SK-N-SH (cell line): ENCODE measurements at regions of chr10 and their contacts with region 1.

Region 1: DNA sequence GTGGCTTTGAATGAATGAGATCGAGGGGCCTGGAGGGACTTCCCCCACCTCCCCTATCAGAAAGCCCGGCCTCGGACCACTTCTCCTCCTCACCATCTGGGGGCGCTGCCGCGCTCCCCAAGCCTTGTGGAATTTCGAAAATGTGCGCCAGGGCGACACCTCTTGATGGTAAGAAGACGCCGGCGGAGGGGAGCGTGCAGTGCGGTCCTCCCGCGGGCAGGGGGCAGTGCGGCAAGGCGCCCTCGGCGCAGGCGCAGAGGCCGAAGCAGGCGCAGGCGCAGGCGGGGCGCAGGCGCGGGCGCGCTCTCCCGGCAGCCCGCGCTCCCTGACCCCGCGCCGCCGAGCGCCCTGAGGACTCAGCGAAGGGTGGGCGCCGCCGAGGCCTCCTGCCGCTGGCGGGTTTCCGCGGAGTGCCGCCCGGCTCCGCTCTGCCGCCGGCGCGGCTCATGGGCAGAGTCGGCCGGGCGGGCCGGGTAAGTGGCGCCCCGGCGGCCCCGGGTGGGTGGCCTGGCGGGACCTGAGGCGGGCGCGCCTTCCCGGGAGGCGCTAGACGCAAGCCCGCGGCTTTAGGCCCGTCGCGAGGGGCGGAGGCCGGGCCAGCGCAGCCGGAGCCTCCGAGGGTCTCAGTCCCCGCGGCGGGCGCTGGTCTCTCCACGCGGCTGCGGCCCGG is at the start of gene RBM17:
- DNase-seq: peak; percentile 96
- H3K4me3 ChIP-seq: peak within 1 kb of the TSS; percentile 89 to 90
- H3K27ac ChIP-seq: peak within 1 kb of the TSS; percentile 36 to 63; a peak in 3 of 4 replicates
- H3K4me1 ChIP-seq: peaks cover 13% of the 10 kb centered on the region in 2 experiments; a peak in 3 of 4 replicates
- H3K27me3 ChIP-seq: 0 out of 2 replicates have a peak, but pooled peaks cover 6% of the 10 kb centered on the region
- CTCF ChIP-seq: peak; percentile 100
- EP300 ChIP-seq: no peak
- RAD21 ChIP-seq: peak; percentile 62
- polyA plus RNA-seq, gene RBM17: 32.6 and 34.2 TPM in 2 replicates

Region 2: GRCh38 chr10:5827841-5828240 is 261.0 kb before region 1 on chr10:
- CTCF ChIA-PET with region 1: no interaction called
- POLR2A ChIA-PET with region 1: no interaction called
- DNase-seq: no peak
- H3K4me3 ChIP-seq: no peak overlapping the region
- H3K27ac ChIP-seq: no peak overlapping the region
- H3K4me1 ChIP-seq: no peaks in the 10 kb centered on the region
- H3K27me3 ChIP-seq: no peaks in the 10 kb centered on the region
- CTCF ChIP-seq: no peak
- EP300 ChIP-seq: no peak
- RAD21 ChIP-seq: no peak

Region 3: DNA sequence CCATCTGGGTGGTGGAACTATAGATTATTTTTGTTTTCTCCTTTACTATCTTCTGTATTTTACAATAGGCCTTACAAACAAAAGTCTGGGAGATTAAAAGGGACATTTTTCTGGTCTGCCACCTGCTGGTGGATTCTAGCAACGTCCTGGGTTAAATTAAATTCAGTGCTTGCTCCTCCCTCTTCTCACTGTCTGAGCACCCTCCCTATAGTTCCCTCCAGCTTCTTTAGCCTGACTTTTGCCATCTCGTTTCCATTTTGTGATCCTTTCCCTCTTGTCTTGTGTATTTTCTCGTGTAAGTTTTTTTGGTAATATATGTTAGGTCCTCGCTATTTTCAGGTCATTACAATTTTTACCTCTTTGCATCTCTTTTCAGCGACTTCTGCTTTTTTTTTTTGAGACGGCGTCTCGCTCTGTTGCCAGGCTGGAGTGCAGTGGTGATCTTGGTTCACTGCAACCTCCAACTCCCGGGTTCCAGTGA is 215.3 kb before region 1 on chr10:
- CTCF ChIA-PET with region 1: no interaction called
- POLR2A ChIA-PET with region 1: no interaction called
- DNase-seq: peak; percentile 81
- H3K4me3 ChIP-seq: no peak overlapping the region; a peak in 1 of 4 replicates
- H3K27ac ChIP-seq: no peak overlapping the region
- H3K4me1 ChIP-seq: peaks cover 8 to 14% of the 10 kb centered on the region in 2 experiments; a peak in 2 of 4 replicates
- H3K27me3 ChIP-seq: no peaks in the 10 kb centered on the region
- CTCF ChIP-seq: peak; percentile 78
- EP300 ChIP-seq: no peak
- RAD21 ChIP-seq: peak; percentile 71

Region 4: DNA sequence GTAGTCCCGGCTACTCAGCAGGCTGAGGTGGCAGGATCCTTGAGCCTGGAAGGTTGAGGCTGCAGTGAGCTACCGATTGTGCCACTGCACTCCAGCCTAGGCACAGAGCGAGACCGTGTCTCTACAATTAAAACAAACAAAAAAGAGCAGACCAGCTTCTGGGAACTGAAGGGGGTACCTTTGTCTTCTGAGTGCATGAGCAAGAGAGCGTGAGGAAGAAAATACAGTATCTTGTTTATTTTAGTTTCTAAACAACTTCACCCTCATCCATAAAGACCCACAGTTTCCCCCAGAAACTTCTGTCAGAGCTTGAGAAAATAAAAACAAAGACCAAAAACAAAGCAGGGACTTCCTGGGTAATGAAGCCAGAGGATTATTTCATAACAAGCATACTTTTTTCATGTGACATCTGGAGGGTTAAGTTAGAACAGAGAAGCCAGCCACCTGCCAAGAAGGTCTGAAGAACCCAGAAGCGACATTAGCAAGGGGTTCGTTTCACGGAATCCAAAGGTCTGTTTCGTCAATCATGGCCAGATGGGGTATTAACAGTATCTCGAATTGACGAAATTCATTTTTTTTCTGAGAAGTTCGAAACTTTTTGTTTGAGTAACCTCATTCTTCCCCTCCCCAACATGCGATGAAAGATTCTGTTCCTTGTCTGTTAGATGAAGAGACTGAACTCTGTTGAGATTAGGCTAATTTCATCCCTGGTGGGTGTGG is 16.5 kb before region 1 on chr10:
- CTCF ChIA-PET with region 1: interaction called, 23 read pairs
- POLR2A ChIA-PET with region 1: no interaction called
- DNase-seq: no peak
- H3K4me3 ChIP-seq: no peak overlapping the region
- H3K27ac ChIP-seq: no peak overlapping the region
- H3K4me1 ChIP-seq: no peaks in the 10 kb centered on the region; a peak in 1 of 4 replicates
- H3K27me3 ChIP-seq: peaks cover 61% of the 10 kb centered on the region
- CTCF ChIP-seq: no peak
- EP300 ChIP-seq: no peak
- RAD21 ChIP-seq: no peak